ENCODE measurements at regions of chr6 and their contacts with region 1.

Region 1: GRCh38 chr6:4402439-4402976 is 267.1 kb upstream of the ECI2 start:
- DNase-seq: peak; percentile 25 to 40
- H3K4me3 ChIP-seq: no peak overlapping the region
- H3K27ac ChIP-seq: peak overlapping the region; percentile 51; the same call in 1 of the 2 replicates
- H3K4me1 ChIP-seq: peaks cover 12% of the 10 kb centered on the region
- H3K27me3 ChIP-seq: no peaks in the 10 kb centered on the region
- CTCF ChIP-seq: no peak

Region 2: GRCh38 chr6:5401845-5402738 is 999.6 kb after region 1 on chr6:
- CTCF ChIA-PET with region 1: no interaction called
- POLR2A ChIA-PET with region 1: interaction called, 15 read pairs
- intact Hi-C with region 1: no loop called
- DNase-seq: no peak
- H3K4me3 ChIP-seq: no peak overlapping the region
- H3K27ac ChIP-seq: no peak overlapping the region
- H3K4me1 ChIP-seq: no peaks in the 10 kb centered on the region
- H3K27me3 ChIP-seq: no peaks in the 10 kb centered on the region
- CTCF ChIP-seq: peak; percentile 66